ENCODE measurements at regions of chr7 and their contacts with region 1.

Region 1: DNA sequence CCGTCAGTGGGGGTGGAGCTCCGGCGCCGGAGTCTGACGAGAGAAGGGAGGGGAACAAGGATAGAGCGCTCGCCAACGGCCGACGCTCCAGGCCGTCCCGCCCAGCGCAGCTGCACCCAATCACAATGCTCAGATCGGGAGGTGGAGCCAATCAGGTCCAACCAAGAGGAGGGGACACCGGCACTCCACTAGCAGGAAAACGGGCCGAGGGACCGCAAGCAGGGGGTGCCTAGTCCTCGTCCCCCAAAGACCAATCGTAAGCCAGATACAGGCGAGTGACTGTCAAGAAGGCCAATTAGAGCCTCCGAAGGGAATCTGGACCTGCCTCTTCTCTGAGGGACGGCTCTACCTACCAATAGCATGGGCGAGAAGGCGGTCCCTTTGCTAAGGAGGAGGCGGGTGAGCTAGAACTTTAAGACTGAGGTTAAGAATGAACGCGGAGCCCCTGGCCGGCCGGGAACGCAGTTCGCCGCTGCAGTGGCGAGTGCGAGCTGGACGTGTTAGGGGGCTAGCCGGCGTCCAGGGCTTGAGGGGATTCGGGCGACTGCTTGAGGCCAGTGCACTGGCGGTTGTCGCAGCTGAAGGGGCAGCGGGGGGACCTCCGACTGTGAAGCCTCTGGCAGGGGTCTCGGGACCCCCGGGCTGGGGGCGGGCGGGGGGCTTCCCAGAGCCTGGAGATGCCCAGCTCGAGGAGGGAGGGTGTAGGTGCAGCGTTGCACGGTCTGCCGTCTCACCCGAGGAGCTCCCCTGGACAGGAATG is at the start of gene FBXO24:
- DNase-seq: peak; percentile 100
- H3K4me3 ChIP-seq: peak within 1 kb of the TSS; percentile 74
- H3K4me3 Mint-ChIP-seq: peak within 1 kb of the TSS; percentile 86
- H3K27ac Mint-ChIP-seq: peak within 1 kb of the TSS; percentile 93
- H3K4me1 ChIP-seq: peaks cover 13% of the 10 kb centered on the region
- H3K4me1 Mint-ChIP-seq: peaks cover 11% of the 10 kb centered on the region
- H3K27me3 ChIP-seq: no peaks in the 10 kb centered on the region
- H3K27me3 Mint-ChIP-seq: no peaks in the 10 kb centered on the region
- CTCF ChIP-seq: no peak
- total RNA-seq, gene FBXO24: 1.4 and 1.5 TPM in 2 replicates

Region 2: DNA sequence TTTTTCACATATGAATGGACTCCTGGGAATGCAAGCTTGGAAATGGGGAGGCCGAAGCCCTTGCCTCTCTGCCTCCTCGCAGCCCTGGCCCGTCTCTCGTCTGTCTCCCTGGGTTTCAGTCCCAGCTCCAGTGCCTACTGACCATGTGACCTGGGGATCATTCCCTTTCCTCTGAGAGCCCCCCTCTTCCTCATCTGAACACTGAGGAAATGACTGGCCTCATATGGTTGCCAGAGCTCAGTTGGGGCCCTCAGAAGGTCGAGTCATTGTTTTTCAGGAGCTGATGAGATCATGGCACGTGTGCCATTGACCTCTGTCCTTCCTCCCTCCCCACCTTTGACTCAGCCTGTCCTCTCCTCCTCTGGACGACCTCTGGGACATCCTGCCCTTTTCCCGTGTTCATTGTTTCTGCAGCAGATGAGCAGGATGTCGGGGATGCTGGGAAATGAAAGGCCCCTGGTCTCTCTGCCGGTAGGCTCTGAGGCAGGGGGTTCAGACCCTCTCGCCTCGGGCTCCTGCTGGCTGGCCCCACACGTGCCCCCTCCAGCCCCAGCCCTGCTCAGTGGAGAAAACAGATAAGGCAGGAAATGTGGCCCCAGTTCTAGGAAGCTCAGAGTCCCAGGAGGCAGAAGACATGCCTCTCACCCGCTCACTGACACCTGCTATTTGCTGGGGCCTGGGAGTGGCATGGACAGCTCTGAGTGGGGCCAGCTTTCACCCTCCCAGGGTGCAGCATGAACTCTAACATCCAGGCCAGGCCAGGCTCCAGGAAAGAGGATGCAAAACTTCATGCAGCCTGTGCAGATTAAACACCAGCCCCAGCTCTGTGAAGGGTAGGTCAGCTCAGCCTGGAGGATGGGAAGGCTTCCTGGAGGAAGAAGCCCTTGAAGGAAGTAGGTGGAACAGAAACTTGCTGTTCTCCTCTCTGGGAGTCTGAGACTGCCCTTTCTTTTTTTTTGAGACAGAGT is 141.9 kb before region 1 on chr7:
- CTCF ChIA-PET with region 1: no interaction called
- POLR2A ChIA-PET with region 1: no interaction called
- intact Hi-C with region 1: no loop called
- DNase-seq: no peak
- H3K4me3 ChIP-seq: no peak overlapping the region
- H3K4me3 Mint-ChIP-seq: no peak overlapping the region
- H3K27ac Mint-ChIP-seq: peak overlapping the region; percentile 37
- H3K4me1 ChIP-seq: peaks cover 13% of the 10 kb centered on the region
- H3K4me1 Mint-ChIP-seq: no peaks in the 10 kb centered on the region
- H3K27me3 ChIP-seq: no peaks in the 10 kb centered on the region
- H3K27me3 Mint-ChIP-seq: no peaks in the 10 kb centered on the region
- CTCF ChIP-seq: no peak

Region 3: GRCh38 chr7:100478966-100479665 is 107.3 kb before region 1 on chr7 and contains the start of gene TSC22D4:
- CTCF ChIA-PET with region 1: interaction called, 4 read pairs
- POLR2A ChIA-PET with region 1: interaction called, 10 read pairs
- intact Hi-C with region 1: no loop called
- DNase-seq: peak; percentile 87 to 93
- H3K4me3 ChIP-seq: peak within 1 kb of the TSS; percentile 94
- H3K4me3 Mint-ChIP-seq: peak within 1 kb of the TSS; percentile 100
- H3K27ac Mint-ChIP-seq: peak within 1 kb of the TSS; percentile 80
- H3K4me1 ChIP-seq: peaks cover 7% of the 10 kb centered on the region; the same call in 1 of the 2 replicates
- H3K4me1 Mint-ChIP-seq: peaks cover 22% of the 10 kb centered on the region
- H3K27me3 ChIP-seq: no peaks in the 10 kb centered on the region
- H3K27me3 Mint-ChIP-seq: no peaks in the 10 kb centered on the region
- CTCF ChIP-seq: no peak
- total RNA-seq, gene TSC22D4: 27.2 and 32.0 TPM in 2 replicates

Region 4: GRCh38 chr7:100563809-100564400 is 22.5 kb before region 1 on chr7:
- CTCF ChIA-PET with region 1: interaction called, 15 read pairs
- POLR2A ChIA-PET with region 1: interaction called, 7 read pairs
- intact Hi-C with region 1: no loop called
- DNase-seq: peak; percentile 77 to 84
- H3K4me3 ChIP-seq: no peak overlapping the region
- H3K4me3 Mint-ChIP-seq: no peak overlapping the region
- H3K27ac Mint-ChIP-seq: peak overlapping the region; percentile 66
- H3K4me1 ChIP-seq: peaks cover 11% of the 10 kb centered on the region; the same call in 1 of the 2 replicates
- H3K4me1 Mint-ChIP-seq: peaks cover 7% of the 10 kb centered on the region
- H3K27me3 ChIP-seq: no peaks in the 10 kb centered on the region
- H3K27me3 Mint-ChIP-seq: no peaks in the 10 kb centered on the region
- CTCF ChIP-seq: peak; percentile 92 to 95

Region 5: DNA sequence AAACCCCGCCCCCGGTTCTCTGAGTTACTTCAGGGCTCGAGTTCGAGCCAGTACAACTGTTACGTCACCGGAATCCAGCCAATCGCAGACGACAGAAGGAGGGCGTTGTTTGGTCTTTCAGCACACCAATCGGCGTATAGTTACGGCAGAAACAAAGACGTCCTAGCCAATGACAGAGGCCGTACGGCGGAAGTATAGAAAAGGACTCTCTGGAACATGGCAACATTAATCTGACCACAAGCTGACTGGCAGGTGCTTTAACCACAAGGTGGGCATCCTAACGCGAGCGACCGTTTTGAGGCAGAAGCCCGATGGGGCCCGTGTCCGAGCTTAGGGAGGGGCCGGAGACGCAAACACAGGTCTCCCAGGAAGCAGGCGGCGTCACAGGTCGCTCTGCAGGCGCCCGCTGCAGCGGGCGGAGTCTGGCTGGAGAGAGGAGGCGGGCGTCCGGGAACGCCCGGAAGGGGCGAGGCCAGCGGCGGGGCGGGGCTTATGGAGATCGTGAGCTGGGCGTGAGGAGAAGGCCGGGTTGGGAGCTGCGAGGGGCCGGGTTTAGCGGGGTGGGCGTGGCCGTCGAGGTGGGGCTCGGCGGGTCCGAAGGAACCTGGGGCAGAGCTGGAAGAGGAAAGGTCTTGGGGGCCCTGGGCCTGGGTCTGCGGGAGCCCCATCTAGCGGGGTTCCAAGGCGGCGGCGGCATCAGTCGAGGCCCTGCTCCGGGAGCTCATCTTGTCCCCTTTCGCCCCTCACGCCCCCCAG is 25.7 kb after region 1 on chr7 and contains the start of gene MOSPD3:
- CTCF ChIA-PET with region 1: interaction called, 21 read pairs
- POLR2A ChIA-PET with region 1: interaction called, 60 read pairs
- intact Hi-C with region 1: loop called (anchors 1 kb)
- DNase-seq: peak; percentile 99
- H3K4me3 ChIP-seq: peak within 1 kb of the TSS; percentile 50
- H3K4me3 Mint-ChIP-seq: peak within 1 kb of the TSS; percentile 86
- H3K27ac Mint-ChIP-seq: peak within 1 kb of the TSS; percentile 95
- H3K4me1 ChIP-seq: peaks cover 10% of the 10 kb centered on the region; the same call in 1 of the 2 replicates
- H3K4me1 Mint-ChIP-seq: no peaks in the 10 kb centered on the region
- H3K27me3 ChIP-seq: no peaks in the 10 kb centered on the region
- H3K27me3 Mint-ChIP-seq: no peaks in the 10 kb centered on the region
- CTCF ChIP-seq: no peak
- total RNA-seq, gene MOSPD3: 24.6 and 24.7 TPM in 2 replicates

Region 6: GRCh38 chr7:100705753-100706671 is 119.6 kb after region 1 on chr7 and contains the start of gene POP7:
- CTCF ChIA-PET with region 1: interaction called, 18 read pairs
- POLR2A ChIA-PET with region 1: interaction called, 30 read pairs
- intact Hi-C with region 1: no loop called
- DNase-seq: peak; percentile 99
- H3K4me3 ChIP-seq: peak within 1 kb of the TSS; percentile 81
- H3K4me3 Mint-ChIP-seq: peak within 1 kb of the TSS; percentile 98
- H3K27ac Mint-ChIP-seq: peak within 1 kb of the TSS; percentile 97
- H3K4me1 ChIP-seq: peaks cover 7% of the 10 kb centered on the region
- H3K4me1 Mint-ChIP-seq: peaks cover 6% of the 10 kb centered on the region
- H3K27me3 ChIP-seq: no peaks in the 10 kb centered on the region
- H3K27me3 Mint-ChIP-seq: no peaks in the 10 kb centered on the region
- CTCF ChIP-seq: no peak
- total RNA-seq, gene POP7: 65.7 and 66.9 TPM in 2 replicates

Region 7: DNA sequence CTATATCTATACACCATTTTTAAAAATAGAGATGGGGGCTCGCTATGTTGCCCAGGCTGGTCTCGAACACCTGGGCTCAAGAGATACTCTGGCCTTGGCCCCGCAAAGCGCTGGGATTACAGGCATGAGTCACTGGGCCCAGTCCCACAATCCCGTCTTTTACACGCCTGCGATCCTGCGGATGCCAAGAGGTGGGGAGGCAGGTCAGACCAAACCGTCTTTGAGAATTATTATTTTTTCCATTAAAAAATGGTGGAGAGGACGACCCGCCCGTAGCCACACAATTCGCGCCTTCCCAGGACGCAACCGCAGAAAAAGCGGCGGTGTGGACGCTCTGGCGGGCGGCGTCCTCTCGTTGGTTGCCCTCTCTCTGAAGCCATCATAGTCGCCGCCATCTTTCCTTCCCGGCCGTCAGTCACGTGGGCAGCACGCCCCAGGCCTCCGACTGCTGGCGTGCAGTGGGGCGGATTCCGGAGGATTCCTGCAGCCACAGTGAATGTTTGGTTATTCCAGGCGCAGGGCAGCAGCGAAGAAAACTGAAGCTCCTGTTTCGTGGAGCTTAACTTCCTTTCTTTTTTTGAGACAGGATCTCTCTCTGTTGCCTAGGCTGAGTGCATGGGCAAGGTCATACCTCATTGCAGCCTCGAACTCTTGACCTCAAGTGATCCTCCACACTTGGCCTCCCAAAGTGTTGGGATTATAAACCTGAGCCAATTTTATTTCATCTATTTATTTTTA is 250.8 kb after region 1 on chr7:
- CTCF ChIA-PET with region 1: no interaction called
- POLR2A ChIA-PET with region 1: no interaction called
- intact Hi-C with region 1: no loop called
- DNase-seq: peak; percentile 92 to 93
- H3K4me3 ChIP-seq: peak overlapping the region; percentile 42
- H3K4me3 Mint-ChIP-seq: peak overlapping the region; percentile 39
- H3K27ac Mint-ChIP-seq: peak overlapping the region; percentile 85
- H3K4me1 ChIP-seq: peaks cover 13% of the 10 kb centered on the region
- H3K4me1 Mint-ChIP-seq: peaks cover 35% of the 10 kb centered on the region
- H3K27me3 ChIP-seq: no peaks in the 10 kb centered on the region
- H3K27me3 Mint-ChIP-seq: no peaks in the 10 kb centered on the region
- CTCF ChIP-seq: no peak